Activated CD8-positive, alpha-beta T cell treated with anti-CD3 and anti-CD28 coated beads, Interleukin-2, amount 10 ng/mL, durations not matched to agents 7 days and 5 days (primary cell): ENCODE measurements at regions of chr5 and their contacts with region 1.

Region 1: GRCh38 chr5:54867310-54867944 is 118.0 kb downstream of the ESM1 start:
- DNase-seq: no peak
- ATAC-seq: peak; percentile 49
- H3K4me3 Mint-ChIP-seq: no peak overlapping the region
- H3K27ac Mint-ChIP-seq: no peak overlapping the region
- H3K4me1 Mint-ChIP-seq: peaks cover 20% of the 10 kb centered on the region
- H3K27me3 Mint-ChIP-seq: peaks cover 41% of the 10 kb centered on the region

Region 2: DNA sequence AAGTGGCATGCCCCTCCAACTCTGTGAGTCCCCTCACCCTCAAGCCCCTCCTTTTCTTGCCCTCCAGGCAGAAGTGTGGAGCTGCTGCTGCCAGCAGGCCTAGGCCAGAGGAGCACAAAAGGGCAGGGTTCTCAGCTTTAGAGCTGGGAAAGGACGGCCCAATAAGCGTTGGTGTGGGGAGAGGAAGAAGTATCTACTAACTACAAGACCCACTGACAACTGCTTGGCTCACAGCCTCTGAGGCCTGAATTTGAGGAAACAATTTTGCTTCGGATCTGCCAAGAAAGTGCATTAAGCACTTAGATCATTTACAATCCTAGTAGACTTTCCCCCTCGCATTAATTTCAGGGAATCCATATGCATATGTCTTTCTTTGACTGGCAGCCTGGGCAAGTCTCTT is 170.5 kb before region 1 on chr5:
- CTCF ChIA-PET with region 1: no interaction called
- POLR2A ChIA-PET with region 1: no interaction called
- DNase-seq: no peak
- ATAC-seq: no peak
- H3K4me3 Mint-ChIP-seq: no peak overlapping the region
- H3K27ac Mint-ChIP-seq: no peak overlapping the region
- H3K4me1 Mint-ChIP-seq: no peaks in the 10 kb centered on the region
- H3K27me3 Mint-ChIP-seq: peaks cover 2% of the 10 kb centered on the region

Region 3: GRCh38 chr5:54743997-54744788 is 123.2 kb before region 1 on chr5:
- CTCF ChIA-PET with region 1: interaction called, 10 read pairs
- POLR2A ChIA-PET with region 1: no interaction called
- DNase-seq: peak; percentile 67
- ATAC-seq: peak; percentile 83
- H3K4me3 Mint-ChIP-seq: peak overlapping the region; percentile 39
- H3K27ac Mint-ChIP-seq: peak overlapping the region; percentile 81
- H3K4me1 Mint-ChIP-seq: peaks cover 31% of the 10 kb centered on the region
- H3K27me3 Mint-ChIP-seq: peaks cover 4% of the 10 kb centered on the region

Region 4: GRCh38 chr5:54852007-54852406 is 15.4 kb before region 1 on chr5:
- CTCF ChIA-PET with region 1: interaction called, 16 read pairs
- POLR2A ChIA-PET with region 1: no interaction called
- DNase-seq: no peak
- ATAC-seq: no peak
- H3K4me3 Mint-ChIP-seq: no peak overlapping the region
- H3K27ac Mint-ChIP-seq: no peak overlapping the region
- H3K4me1 Mint-ChIP-seq: peaks cover 3% of the 10 kb centered on the region
- H3K27me3 Mint-ChIP-seq: peaks cover 22% of the 10 kb centered on the region

Region 5: GRCh38 chr5:54883374-54884212 is 16.2 kb after region 1 on chr5:
- CTCF ChIA-PET with region 1: interaction called, 41 read pairs
- POLR2A ChIA-PET with region 1: no interaction called
- DNase-seq: no peak
- ATAC-seq: peak; percentile 54
- H3K4me3 Mint-ChIP-seq: peak overlapping the region; percentile 52
- H3K27ac Mint-ChIP-seq: no peak overlapping the region
- H3K4me1 Mint-ChIP-seq: peaks cover 27% of the 10 kb centered on the region
- H3K27me3 Mint-ChIP-seq: peaks cover 65% of the 10 kb centered on the region

Region 6: DNA sequence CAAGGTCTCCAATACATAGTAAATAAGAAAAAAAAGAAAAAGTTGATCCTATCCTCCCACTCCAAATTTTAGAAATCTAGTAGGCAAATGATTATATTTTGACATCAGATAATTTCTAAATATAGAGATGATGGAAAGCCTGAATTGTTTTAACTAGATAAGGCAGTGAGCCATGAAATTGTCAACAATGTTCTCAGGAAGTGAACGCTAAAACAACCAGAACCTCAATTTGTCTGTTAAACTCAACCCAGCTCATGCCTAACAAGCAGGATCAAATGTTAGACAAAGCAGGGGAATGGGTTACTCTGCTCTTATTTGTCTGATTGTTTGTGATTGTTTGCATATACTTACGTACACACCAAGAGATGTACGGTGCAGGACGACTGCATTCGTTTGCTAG is 68.8 kb after region 1 on chr5:
- CTCF ChIA-PET with region 1: no interaction called
- POLR2A ChIA-PET with region 1: no interaction called
- DNase-seq: no peak
- ATAC-seq: no peak
- H3K4me3 Mint-ChIP-seq: no peak overlapping the region
- H3K27ac Mint-ChIP-seq: no peak overlapping the region
- H3K4me1 Mint-ChIP-seq: no peaks in the 10 kb centered on the region
- H3K27me3 Mint-ChIP-seq: peaks cover 44% of the 10 kb centered on the region